ENCODE measurements at regions of chr3 and their contacts with region 1.

Region 1: GRCh38 chr3:97464035-97464434 is 300.5 kb upstream of the ARL6 start:
- DNase-seq: no peak
- ATAC-seq: no peak
- H3K4me3 ChIP-seq: no peak overlapping the region
- H3K27ac ChIP-seq: no peak overlapping the region
- H3K4me1 ChIP-seq: no peaks in the 10 kb centered on the region
- H3K27me3 ChIP-seq: no peaks in the 10 kb centered on the region
- CTCF ChIP-seq: no peak
- EP300 ChIP-seq: no peak
- POLR2A ChIP-seq: no peak
- RAD21 ChIP-seq: no peak

Region 2: DNA sequence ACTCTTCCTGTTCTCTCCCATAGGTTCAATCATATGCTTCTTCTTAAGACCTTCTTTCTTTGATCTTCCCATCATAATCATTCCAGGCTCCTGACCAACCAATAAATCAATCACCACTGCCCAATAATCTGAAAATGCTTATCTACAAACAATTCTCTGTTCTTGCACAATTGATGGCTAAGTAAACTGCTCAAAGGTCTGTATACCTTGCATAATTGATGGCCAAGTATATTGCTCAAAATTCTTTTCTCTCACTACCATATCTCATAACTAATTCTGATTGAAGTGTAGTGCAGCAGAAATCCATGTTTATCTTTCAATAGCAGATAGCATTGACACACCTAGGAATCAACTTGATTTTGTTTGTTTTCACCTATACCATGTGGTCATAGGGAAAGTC is 733.0 kb before region 1 on chr3:
- CTCF ChIA-PET with region 1: no interaction called
- POLR2A ChIA-PET with region 1: no interaction called
- RAD21 ChIA-PET with region 1: no interaction called
- SMC1A ChIA-PET with region 1: no interaction called
- in situ Hi-C with region 1: no loop called
- intact Hi-C with region 1: no loop called
- DNase-seq: no peak
- ATAC-seq: no peak
- H3K4me3 ChIP-seq: no peak overlapping the region
- H3K27ac ChIP-seq: no peak overlapping the region
- H3K4me1 ChIP-seq: no peaks in the 10 kb centered on the region
- H3K27me3 ChIP-seq: no peaks in the 10 kb centered on the region
- CTCF ChIP-seq: no peak
- EP300 ChIP-seq: no peak
- POLR2A ChIP-seq: no peak
- RAD21 ChIP-seq: no peak

Region 3: DNA sequence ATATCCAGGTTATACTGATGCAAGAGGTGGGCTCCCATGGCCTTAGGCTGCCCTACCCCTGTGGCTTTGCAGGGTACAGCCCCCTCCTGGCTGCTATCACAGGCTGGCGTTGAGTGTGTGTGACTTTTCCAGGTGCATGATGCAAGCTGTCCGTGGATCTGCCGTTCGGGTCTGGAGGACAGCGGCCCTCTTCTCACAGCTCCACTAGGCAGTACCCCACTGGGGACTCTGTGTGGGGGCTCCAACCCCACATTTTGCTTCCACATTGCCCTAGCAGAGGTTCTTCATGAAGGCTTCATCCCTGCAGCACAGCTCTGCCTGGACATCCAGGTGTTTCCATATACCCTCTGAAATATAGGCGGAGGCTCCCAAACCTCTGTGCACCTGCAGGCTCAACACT is 39.0 kb before region 1 on chr3:
- CTCF ChIA-PET with region 1: no interaction called
- POLR2A ChIA-PET with region 1: no interaction called
- RAD21 ChIA-PET with region 1: no interaction called
- SMC1A ChIA-PET with region 1: no interaction called
- in situ Hi-C with region 1: no loop called
- intact Hi-C with region 1: no loop called
- DNase-seq: no peak
- ATAC-seq: no peak
- H3K4me3 ChIP-seq: no peak overlapping the region
- H3K27ac ChIP-seq: no peak overlapping the region
- H3K4me1 ChIP-seq: no peaks in the 10 kb centered on the region
- H3K27me3 ChIP-seq: no peaks in the 10 kb centered on the region; a peak in 1 of 4 replicates
- CTCF ChIP-seq: no peak
- EP300 ChIP-seq: no peak
- POLR2A ChIP-seq: no peak
- RAD21 ChIP-seq: no peak

Region 4: DNA sequence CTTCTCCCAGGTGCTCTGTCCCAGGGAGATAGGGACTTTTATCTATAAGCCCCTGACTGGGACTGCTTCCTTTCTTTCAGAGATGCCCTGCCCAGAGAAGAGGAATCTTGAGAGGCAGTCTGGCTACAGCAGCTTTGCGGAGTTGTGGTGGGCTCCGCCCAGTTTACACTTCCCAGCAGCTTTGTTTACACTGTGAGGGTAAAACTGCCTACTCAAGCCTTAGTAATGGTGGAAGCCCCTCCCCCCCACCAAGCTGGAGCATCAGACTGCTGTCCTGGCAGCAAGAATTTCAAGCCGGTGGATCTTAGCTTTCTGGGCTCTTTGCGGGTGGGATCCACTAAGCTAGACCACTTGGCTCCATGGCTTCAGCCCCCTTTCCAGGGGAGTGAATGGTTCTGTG is 46.8 kb after region 1 on chr3:
- CTCF ChIA-PET with region 1: no interaction called
- POLR2A ChIA-PET with region 1: no interaction called
- RAD21 ChIA-PET with region 1: no interaction called
- SMC1A ChIA-PET with region 1: no interaction called
- in situ Hi-C with region 1: no loop called
- intact Hi-C with region 1: loop called (anchors 1 kb)
- DNase-seq: no peak
- ATAC-seq: no peak
- H3K4me3 ChIP-seq: no peak overlapping the region
- H3K27ac ChIP-seq: no peak overlapping the region
- H3K4me1 ChIP-seq: no peaks in the 10 kb centered on the region
- H3K27me3 ChIP-seq: no peaks in the 10 kb centered on the region
- CTCF ChIP-seq: no peak
- EP300 ChIP-seq: no peak
- POLR2A ChIP-seq: no peak
- RAD21 ChIP-seq: no peak

Measured in GM12878 (cell line).